ENCODE measurements at regions of chr6 and their contacts with region 1.

Region 1: GRCh38 chr6:32971581-32972352 is 3.4 kb downstream of the BRD2 start:
- DNase-seq: peak; percentile 100
- ATAC-seq: peak; percentile 31
- H3K4me3 ChIP-seq: peak overlapping the region; percentile 92
- H3K27ac ChIP-seq: peak overlapping the region; percentile 100
- H3K4me1 ChIP-seq: peaks cover 7% of the 10 kb centered on the region
- H3K27me3 ChIP-seq: no peaks in the 10 kb centered on the region
- CTCF ChIP-seq: no peak
- POLR2A ChIP-seq: peak; percentile 100
- RAD21 ChIP-seq: 0 out of 2 replicates have a peak, but pooled peaks have one; percentile 22

Region 2: GRCh38 chr6:32190054-32190851 is 781.5 kb before region 1 on chr6 and contains the start of gene PBX2:
- CTCF ChIA-PET with region 1: no interaction called
- POLR2A ChIA-PET with region 1: interaction called, 5 read pairs
- dilution Hi-C with region 1: no loop called
- in situ Hi-C with region 1: loop called (anchors 25 kb)
- intact Hi-C with region 1: loop called (anchors 5 kb)
- DNase-seq: peak; percentile 89
- ATAC-seq: peak; percentile 79
- H3K4me3 ChIP-seq: peak within 1 kb of the TSS; percentile 75
- H3K27ac ChIP-seq: peak within 1 kb of the TSS; percentile 99
- H3K4me1 ChIP-seq: peaks cover 12% of the 10 kb centered on the region
- H3K27me3 ChIP-seq: no peaks in the 10 kb centered on the region
- CTCF ChIP-seq: no peak
- POLR2A ChIP-seq: 0 out of 2 replicates have a peak, but pooled peaks have one; percentile 23
- RAD21 ChIP-seq: no peak
- total RNA-seq, gene PBX2: 13.9 and 17.7 TPM in 2 replicates

Region 3: DNA sequence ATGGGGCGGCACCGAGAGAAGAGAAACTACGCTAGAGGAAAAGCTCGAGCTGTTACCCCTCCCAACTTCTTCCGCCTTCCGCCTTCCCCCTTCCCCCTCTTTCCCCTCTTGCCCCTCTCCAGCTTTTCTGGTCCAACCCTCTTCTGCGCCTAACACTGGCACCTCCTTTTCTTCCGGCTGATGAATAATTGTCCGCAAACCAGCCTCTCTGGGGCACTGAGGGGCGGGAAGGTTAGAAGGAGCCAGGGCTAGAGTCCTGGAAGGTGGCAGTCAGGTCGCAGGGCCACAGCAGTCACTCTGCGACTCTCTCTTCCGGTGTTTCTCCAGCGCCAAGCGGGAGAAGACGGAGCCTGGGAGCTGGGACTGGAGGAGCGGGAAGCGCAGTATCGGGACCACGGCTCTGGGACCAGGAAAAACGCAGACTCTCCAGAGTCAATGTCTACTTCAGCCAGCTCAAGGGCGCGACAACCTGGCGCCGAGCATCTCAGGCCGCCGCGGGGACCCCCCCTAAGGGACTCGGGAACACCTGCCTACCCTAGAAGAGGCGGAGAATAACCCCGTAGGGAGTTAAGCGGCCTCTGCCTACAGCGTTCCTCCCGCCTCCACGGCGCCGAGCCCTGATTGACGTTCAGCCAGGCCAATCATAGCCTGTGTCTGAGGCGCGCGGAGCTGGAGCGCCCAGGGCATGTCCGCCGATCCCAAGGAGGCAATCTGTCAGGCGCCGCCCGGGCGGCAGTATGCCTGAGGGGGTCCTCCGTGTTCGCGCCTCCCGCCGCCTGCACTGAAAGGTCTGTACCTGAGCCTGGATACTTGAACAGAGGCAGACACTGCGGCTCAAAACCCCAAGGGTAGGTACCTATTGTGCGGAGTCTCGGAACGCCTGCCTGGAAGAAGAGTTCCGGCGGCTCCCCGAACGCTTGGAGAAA is 77.4 kb before region 1 on chr6:
- CTCF ChIA-PET with region 1: interaction called, 6 read pairs
- POLR2A ChIA-PET with region 1: interaction called, 10 read pairs
- dilution Hi-C with region 1: no loop called
- in situ Hi-C with region 1: loop called (anchors 5 kb)
- intact Hi-C with region 1: loop called (anchors 2 kb)
- DNase-seq: peak; percentile 88
- ATAC-seq: peak; percentile 99
- H3K4me3 ChIP-seq: peak overlapping the region; percentile 84
- H3K27ac ChIP-seq: peak overlapping the region; percentile 81
- H3K4me1 ChIP-seq: peaks cover 2% of the 10 kb centered on the region; the same call in 1 of the 2 replicates
- H3K27me3 ChIP-seq: no peaks in the 10 kb centered on the region
- CTCF ChIP-seq: no peak
- POLR2A ChIP-seq: no peak
- RAD21 ChIP-seq: no peak

Region 4: GRCh38 chr6:32952817-32953739 is 18.7 kb before region 1 on chr6 and contains the start of gene HLA-DMA:
- CTCF ChIA-PET with region 1: interaction called, 10 read pairs
- POLR2A ChIA-PET with region 1: interaction called, 15 read pairs
- dilution Hi-C with region 1: no loop called
- in situ Hi-C with region 1: no loop called
- intact Hi-C with region 1: loop called (anchors 1 kb)
- DNase-seq: peak; percentile 96
- ATAC-seq: peak; percentile 99
- H3K4me3 ChIP-seq: no peak within 1 kb of the TSS
- H3K27ac ChIP-seq: peak within 1 kb of the TSS; percentile 8; the same call in 1 of the 2 replicates
- H3K4me1 ChIP-seq: peaks cover 3% of the 10 kb centered on the region; the same call in 1 of the 2 replicates
- H3K27me3 ChIP-seq: no peaks in the 10 kb centered on the region
- CTCF ChIP-seq: peak; percentile 75
- POLR2A ChIP-seq: no peak
- RAD21 ChIP-seq: peak; percentile 67
- total RNA-seq, gene HLA-DMA: 1.7 and 2.3 TPM in 2 replicates

Region 5: GRCh38 chr6:33000055-33000454 is 28.3 kb after region 1 on chr6:
- CTCF ChIA-PET with region 1: no interaction called
- POLR2A ChIA-PET with region 1: interaction called, 13 read pairs
- dilution Hi-C with region 1: no loop called
- in situ Hi-C with region 1: no loop called
- intact Hi-C with region 1: no loop called
- DNase-seq: no peak
- ATAC-seq: no peak
- H3K4me3 ChIP-seq: no peak overlapping the region
- H3K27ac ChIP-seq: no peak overlapping the region
- H3K4me1 ChIP-seq: no peaks in the 10 kb centered on the region
- H3K27me3 ChIP-seq: peaks cover 41% of the 10 kb centered on the region
- CTCF ChIP-seq: no peak
- POLR2A ChIP-seq: no peak
- RAD21 ChIP-seq: no peak

Region 6: DNA sequence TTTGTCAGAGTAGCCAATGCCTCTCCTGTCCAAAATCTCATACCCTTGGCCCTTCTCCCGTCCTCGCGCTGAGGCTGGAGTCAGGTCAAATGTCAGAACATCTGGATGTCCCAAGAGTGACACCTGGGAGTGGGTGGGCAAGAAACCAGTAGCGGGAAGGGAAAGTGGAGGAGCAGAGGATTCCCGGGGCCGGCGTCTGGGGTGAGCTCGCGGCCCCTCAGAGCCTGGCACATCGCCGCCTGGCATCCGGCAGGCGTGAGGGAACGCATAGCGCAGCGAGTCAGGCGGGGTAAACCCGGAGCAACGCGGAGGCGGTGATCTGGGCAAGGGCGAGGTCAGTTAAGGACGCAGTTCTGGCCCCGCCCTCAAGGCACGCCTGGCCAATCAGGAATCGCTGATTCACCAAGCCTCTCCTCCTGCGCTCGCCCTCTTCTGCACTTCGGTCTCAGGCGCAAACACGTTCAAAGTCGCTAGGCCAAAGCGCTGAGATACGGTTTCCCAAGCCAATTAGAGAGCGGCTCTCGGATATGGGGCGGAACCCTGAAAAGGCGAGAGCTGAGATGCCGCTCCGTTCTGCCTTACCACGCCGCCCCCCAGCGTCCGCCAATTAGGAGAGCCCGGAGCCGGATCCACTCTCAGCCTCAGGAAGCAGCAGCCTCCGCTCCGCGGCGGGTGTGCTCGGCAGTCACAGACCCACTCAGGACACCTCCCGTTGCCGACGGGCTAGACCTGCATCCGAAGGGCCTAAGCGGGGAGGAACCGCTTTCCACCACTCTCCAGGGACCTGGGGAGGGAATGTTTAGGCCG is 277.4 kb after region 1 on chr6:
- CTCF ChIA-PET with region 1: no interaction called
- POLR2A ChIA-PET with region 1: interaction called, 5 read pairs
- dilution Hi-C with region 1: no loop called
- in situ Hi-C with region 1: no loop called
- intact Hi-C with region 1: loop called (anchors 2 kb)
- DNase-seq: peak; percentile 99
- ATAC-seq: peak; percentile 87
- H3K4me3 ChIP-seq: peak overlapping the region; percentile 64
- H3K27ac ChIP-seq: peak overlapping the region; percentile 95
- H3K4me1 ChIP-seq: peaks cover 12% of the 10 kb centered on the region
- H3K27me3 ChIP-seq: no peaks in the 10 kb centered on the region
- CTCF ChIP-seq: 0 out of 2 replicates have a peak, but pooled peaks have one; percentile 20
- POLR2A ChIP-seq: peak; percentile 88
- RAD21 ChIP-seq: no peak

Measured in IMR-90 (cell line).